ENCODE measurements at regions of chr2 and their contacts with region 1.

Region 1: DNA sequence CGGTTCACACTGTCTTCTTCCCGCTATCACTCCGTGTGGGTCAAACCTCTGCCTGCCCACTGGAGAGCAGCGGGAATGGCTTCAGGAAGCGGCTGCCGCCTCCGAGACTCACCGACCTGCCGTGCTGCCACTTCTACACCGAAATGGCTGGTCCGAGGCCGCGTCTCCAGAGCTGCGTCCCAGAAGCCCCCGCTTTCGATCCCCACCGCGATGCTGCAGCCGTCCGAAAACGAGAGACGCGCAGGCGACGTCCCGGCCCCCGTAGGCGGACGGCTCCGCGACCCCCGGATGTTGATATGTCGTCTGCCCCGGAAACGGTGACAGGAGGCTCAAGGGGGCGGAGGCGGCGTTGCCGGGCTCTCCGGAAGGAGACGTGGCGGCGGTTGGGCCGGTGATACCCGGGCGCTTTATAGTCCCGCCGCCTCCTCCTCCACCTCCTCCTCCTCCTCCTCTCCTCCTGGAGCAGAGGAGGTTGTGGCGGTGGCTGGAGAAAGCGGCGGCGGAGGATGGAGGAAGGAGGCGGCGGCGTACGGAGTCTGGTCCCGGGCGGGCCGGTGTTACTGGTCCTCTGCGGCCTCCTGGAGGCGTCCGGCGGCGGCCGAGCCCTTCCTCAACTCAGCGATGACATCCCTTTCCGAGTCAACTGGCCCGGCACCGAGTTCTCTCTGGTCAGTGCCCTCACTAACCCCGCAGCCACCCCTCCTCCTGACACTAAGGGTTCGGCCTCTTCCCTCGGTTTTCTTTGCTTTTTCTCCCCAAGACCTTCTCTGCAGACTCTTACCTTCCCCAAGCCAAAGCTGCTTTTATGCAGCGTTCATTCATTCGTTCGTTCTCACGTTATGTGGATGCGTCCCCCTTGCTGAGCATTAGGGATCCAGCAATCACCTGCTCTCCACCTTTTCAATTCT is at the starts of genes ASB3 and ERLEC1:
- DNase-seq: peak; percentile 83 to 96 (median 90)
- H3K4me3 ChIP-seq: peak within 1 kb of the TSS; percentile 68 to 98 (median 90)
- H3K27ac ChIP-seq: peak within 1 kb of the TSS; percentile 64 to 97 (median 89)
- H3K27me3 ChIP-seq: no peaks in the 10 kb centered on the region
- CTCF ChIP-seq: peak in 34 of 56 donors; percentile 3 to 55 (median 34)
- total RNA-seq, gene ASB3: 32.1 to 88.1 (median 57.9) TPM
- total RNA-seq, gene ERLEC1: 22.6 to 82.8 (median 55.2) TPM

Region 2: DNA sequence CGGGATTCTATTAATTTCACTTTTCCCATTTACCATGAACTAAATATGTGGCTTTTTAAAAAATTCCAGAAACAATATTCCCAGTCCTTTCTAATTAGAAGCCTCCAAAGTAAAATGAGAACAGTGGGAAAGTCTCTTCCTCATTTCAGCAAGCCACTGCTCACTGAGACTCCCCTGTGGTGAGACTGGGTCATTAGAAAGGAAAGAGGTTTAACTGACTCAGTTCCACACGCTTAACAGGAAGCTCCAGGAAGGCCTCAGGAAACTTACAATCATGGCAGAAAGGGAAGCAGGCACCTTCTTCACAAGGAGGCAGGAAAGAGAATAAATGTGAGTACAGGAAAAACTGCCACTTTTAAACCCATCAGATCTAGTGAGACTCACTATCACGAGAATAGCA is 278.3 kb before region 1 on chr2:
- intact Hi-C with region 1: no loop called
- DNase-seq: no peak
- H3K4me3 ChIP-seq: no peak overlapping the region
- H3K27ac ChIP-seq: no peak overlapping the region
- H3K27me3 ChIP-seq: no peaks in the 10 kb centered on the region
- CTCF ChIP-seq: no peak

Region 3: GRCh38 chr2:53767405-53768241 is 19.3 kb before region 1 on chr2 and contains the start of gene CHAC2:
- intact Hi-C with region 1: loop called in 1 of 2 experiments (anchors 2 kb)
- DNase-seq: peak; percentile 66 to 89 (median 84)
- H3K4me3 ChIP-seq: peak within 1 kb of the TSS; percentile 58 to 96 (median 80)
- H3K27ac ChIP-seq: peak within 1 kb of the TSS; percentile 42 to 94 (median 86)
- H3K27me3 ChIP-seq: no peaks in the 10 kb centered on the region
- CTCF ChIP-seq: peak in 51 of 56 donors; percentile 26 to 68 (median 53)
- total RNA-seq, gene CHAC2: 0.34 to 4.3 (median 1.8) TPM

Region 4: GRCh38 chr2:54029721-54030395 is 242.9 kb after region 1 on chr2:
- intact Hi-C with region 1: no loop called
- DNase-seq: no peak
- H3K4me3 ChIP-seq: no peak overlapping the region
- H3K27ac ChIP-seq: peak overlapping the region in 19 of 59 donors; percentile 2 to 59 (median 28)
- H3K27me3 ChIP-seq: no peaks in the 10 kb centered on the region
- CTCF ChIP-seq: no peak

Measured in dorsolateral prefrontal cortex (tissue), 120 donors.